Activated CD4-positive, alpha-beta T cell treated with anti-CD3 and anti-CD28 coated beads for 36 hours (primary cell): ENCODE measurements at regions of chr6 and their contacts with region 1.

Region 1: DNA sequence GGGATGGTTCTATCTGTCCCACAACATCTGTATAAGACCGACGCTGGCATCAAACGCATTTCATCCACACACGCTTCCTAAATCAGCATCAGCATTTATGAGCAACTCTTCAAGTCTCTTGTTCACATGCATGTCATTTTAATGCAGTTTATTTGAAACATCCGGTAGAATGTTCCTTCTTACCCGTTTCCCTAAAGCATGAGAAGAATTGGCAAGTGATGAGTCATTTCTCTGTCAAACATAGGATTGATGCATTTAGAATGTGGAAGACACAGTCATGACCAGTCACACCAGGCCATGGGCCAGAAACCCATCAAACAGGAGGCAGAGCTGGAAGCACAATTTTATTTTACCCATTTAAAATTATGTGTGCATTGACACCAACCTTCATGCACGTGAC is 122.8 kb downstream of the UST start:
- DNase-seq: no peak
- ATAC-seq: no peak
- H3K4me3 Mint-ChIP-seq: no peak overlapping the region
- H3K27ac Mint-ChIP-seq: no peak overlapping the region
- H3K4me1 Mint-ChIP-seq: peaks cover 28% of the 10 kb centered on the region
- H3K27me3 Mint-ChIP-seq: peaks cover 2% of the 10 kb centered on the region

Region 2: DNA sequence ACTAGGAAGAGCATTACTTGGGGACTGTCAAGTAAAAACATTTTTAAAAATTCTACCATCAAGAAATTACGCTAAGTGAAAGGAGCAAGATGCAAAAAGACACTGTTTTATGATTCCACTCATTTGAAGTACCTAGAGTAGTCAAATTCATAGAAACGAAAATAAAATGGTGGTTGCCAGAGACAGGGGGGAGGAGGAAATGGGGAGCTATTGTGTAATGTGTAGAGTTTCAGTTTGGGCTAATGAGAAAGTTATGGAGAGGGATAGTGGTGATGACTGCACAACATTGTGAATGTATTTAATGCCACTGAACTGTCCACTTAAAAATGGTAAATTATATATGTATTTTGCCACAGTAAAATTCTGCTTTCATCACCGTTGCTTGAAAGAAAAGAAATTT is 39.0 kb before region 1 on chr6:
- CTCF ChIA-PET with region 1: no interaction called
- POLR2A ChIA-PET with region 1: no interaction called
- intact Hi-C with region 1: loop called (anchors 1 to 2 kb)
- DNase-seq: no peak
- ATAC-seq: peak; percentile 75
- H3K4me3 Mint-ChIP-seq: peak overlapping the region; percentile 65
- H3K27ac Mint-ChIP-seq: peak overlapping the region; percentile 49
- H3K4me1 Mint-ChIP-seq: peaks cover 39% of the 10 kb centered on the region
- H3K27me3 Mint-ChIP-seq: peaks cover 11% of the 10 kb centered on the region

Region 3: GRCh38 chr6:148835920-148836441 is 33.6 kb before region 1 on chr6:
- CTCF ChIA-PET with region 1: interaction called, 3 read pairs
- POLR2A ChIA-PET with region 1: no interaction called
- intact Hi-C with region 1: loop called in 1 of 2 experiments (anchors 1 kb)
- DNase-seq: peak; percentile 69
- ATAC-seq: peak; percentile 80
- H3K4me3 Mint-ChIP-seq: peak overlapping the region; percentile 65
- H3K27ac Mint-ChIP-seq: peak overlapping the region; percentile 92
- H3K4me1 Mint-ChIP-seq: peaks cover 36% of the 10 kb centered on the region
- H3K27me3 Mint-ChIP-seq: peaks cover 5% of the 10 kb centered on the region